Right cardiac atrium (tissue), 5 donors: ENCODE measurements at regions of chr15 and their contacts with region 1.

Region 1: GRCh38 chr15:75684642-75685041 is 28.0 kb downstream of the CSPG4 start:
- DNase-seq: no peak
- ATAC-seq: no peak
- H3K4me3 ChIP-seq: no peak overlapping the region
- H3K27ac ChIP-seq: no peak overlapping the region
- H3K4me1 ChIP-seq: no peaks in the 10 kb centered on the region
- H3K27me3 ChIP-seq: no peaks in the 10 kb centered on the region

Region 2: DNA sequence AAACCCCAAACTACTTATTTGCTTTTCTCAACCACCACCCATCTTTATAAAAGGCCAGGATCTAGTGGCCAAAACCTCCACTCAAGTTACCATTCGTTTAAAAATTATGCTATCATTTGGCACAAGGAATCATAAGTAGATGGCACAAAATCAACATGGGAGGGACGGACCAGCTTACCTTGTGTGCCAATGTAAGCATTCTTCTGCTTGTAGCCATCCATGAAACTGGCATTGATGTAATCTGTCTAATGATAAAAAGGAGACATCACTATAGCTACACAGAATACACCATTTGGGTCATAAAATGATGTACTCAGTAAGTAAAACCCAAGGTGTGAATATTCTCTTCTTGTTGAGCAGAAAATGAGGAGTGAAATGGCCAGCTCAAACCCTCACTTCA is 205.0 kb before region 1 on chr15:
- intact Hi-C with region 1: no loop called
- DNase-seq: no peak
- ATAC-seq: no peak
- H3K4me3 ChIP-seq: no peak overlapping the region
- H3K27ac ChIP-seq: no peak overlapping the region
- H3K4me1 ChIP-seq: no peaks in the 10 kb centered on the region
- H3K27me3 ChIP-seq: no peaks in the 10 kb centered on the region

Region 3: DNA sequence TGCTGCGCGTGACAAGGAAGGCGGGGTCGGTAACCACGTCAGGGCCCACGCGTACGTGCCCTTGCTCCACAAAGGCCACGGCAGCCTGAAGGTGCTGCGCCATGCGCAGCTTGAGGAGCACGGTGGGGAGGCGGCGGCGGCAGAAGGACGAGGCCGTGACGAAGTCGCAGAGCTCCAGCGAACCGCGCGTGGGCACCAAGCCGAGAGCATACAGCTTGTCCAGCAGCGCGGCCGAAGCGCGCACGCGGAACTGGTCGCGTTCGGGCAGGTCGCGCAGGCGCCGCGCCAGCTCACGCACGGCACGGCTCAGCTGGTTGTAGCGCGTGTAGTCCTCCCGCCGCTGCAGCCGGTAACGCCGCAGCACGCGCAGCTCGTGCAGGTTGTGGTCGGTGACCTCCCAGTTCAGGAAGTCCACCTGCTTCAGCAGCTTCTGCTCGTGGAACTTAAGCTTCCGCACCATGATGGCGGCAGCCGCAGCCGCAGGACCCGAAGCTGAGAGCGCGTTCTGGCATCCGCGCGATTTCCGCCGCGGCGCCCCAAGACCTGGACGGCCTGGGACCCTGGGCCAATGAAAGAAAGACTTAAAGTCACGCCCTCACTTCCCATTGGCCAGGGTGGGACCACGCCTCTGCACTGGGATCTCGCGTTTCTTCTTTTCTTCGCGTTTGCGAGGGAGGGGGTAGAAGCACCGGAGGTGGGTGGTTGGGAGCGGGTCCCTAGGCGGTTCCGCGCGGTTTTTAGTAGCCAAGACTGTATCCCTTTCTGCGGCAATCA is 44.7 kb before region 1 on chr15 and contains the start of gene IMP3:
- intact Hi-C with region 1: loop called in 1 of 4 experiments (anchors 10 kb)
- DNase-seq: peak; percentile 94 to 98 (median 97)
- ATAC-seq: peak; percentile 97 to 98
- H3K4me3 ChIP-seq: peak within 1 kb of the TSS; percentile 74
- H3K27ac ChIP-seq: peak within 1 kb of the TSS; percentile 97
- H3K4me1 ChIP-seq: peaks cover 3% of the 10 kb centered on the region
- H3K27me3 ChIP-seq: no peaks in the 10 kb centered on the region
- total RNA-seq, gene IMP3: 39.4 to 49.3 (median 46.8) TPM

Region 4: DNA sequence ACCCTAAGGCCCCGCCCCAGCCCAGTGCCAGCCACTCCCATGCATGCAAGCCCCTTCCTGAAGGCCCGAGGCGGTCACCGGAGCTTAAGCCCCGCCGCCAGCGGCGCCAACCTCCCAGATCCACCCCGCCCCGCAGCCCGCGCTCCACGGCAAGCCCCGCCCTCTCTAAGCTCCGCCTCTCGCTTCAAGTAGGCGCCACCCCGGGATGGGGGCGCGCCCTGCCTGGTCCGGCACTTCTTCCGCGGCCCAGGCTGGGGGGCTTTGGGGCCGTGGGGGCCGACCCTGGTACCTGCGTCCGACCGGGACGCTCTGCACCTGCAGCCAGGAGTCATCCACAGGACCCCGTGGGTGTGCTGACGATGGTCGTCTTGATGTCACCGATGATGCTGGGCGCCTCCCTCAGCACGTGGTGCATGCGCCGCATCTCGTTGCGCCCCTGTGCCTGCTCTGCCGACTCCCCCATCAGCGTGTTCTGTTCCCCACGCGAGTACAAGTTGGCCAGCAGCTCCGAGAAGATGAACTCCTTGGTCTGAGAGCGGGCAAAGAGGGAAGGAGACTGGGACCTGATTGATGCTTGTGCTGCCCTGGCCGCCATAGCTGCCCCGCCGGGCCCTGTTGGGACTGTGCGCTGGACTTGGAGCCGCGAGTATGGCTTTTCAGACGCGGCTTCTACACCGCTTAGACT is 54.1 kb after region 1 on chr15:
- intact Hi-C with region 1: loop called in 1 of 4 experiments (anchors 10 kb)
- DNase-seq: peak; percentile 96 to 98 (median 98)
- ATAC-seq: peak; percentile 98 to 99
- H3K4me3 ChIP-seq: peak overlapping the region; percentile 62
- H3K27ac ChIP-seq: no peak overlapping the region
- H3K4me1 ChIP-seq: no peaks in the 10 kb centered on the region
- H3K27me3 ChIP-seq: no peaks in the 10 kb centered on the region